ENCODE measurements at regions of chr1 and their contacts with region 1.

Region 1: GRCh38 chr1:114458237-114458777 is 52.7 kb downstream of the TRIM33 start:
- DNase-seq: peak; percentile 77
- ATAC-seq: peak; percentile 39
- H3K4me3 ChIP-seq: peak overlapping the region in 2 of 3 experiments; percentile 18 to 29; a peak in 1 of 6 replicates
- H3K27ac ChIP-seq: peak overlapping the region; percentile 92
- H3K4me1 ChIP-seq: peaks cover 69% of the 10 kb centered on the region
- H3K27me3 ChIP-seq: no peaks in the 10 kb centered on the region
- CTCF ChIP-seq: no peak
- EP300 ChIP-seq: peak in 1 of 2 experiments; percentile 69; a peak in 2 of 4 replicates
- POLR2A ChIP-seq: no peak
- RAD21 ChIP-seq: no peak

Region 2: GRCh38 chr1:114407898-114408555 is 50.3 kb before region 1 on chr1:
- CTCF ChIA-PET with region 1: no interaction called
- POLR2A ChIA-PET with region 1: no interaction called
- in situ Hi-C with region 1: no loop called
- intact Hi-C with region 1: no loop called
- DNase-seq: no peak
- ATAC-seq: no peak
- H3K4me3 ChIP-seq: no peak overlapping the region
- H3K27ac ChIP-seq: no peak overlapping the region
- H3K4me1 ChIP-seq: no peaks in the 10 kb centered on the region
- H3K27me3 ChIP-seq: no peaks in the 10 kb centered on the region
- CTCF ChIP-seq: no peak
- EP300 ChIP-seq: no peak
- POLR2A ChIP-seq: no peak
- RAD21 ChIP-seq: no peak

Region 3: DNA sequence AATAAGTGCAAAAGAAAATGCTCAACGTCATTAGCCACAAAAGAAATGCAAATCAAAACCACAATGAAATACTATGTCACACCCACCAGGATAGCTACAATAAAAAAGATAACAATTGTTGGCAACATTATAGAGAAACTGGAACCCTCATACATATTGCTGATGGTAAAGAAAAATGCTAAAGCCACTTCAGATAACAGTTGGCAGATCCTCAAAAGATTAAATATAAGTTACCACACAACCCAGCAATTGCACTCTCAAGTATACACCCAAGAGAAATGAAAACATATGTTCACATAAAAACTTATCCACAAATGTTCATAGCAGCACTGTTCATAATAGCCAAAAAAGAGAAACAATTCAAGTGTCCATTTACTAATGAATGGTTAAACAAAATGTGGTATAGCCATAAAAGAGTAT is 32.0 kb after region 1 on chr1:
- CTCF ChIA-PET with region 1: no interaction called
- POLR2A ChIA-PET with region 1: no interaction called
- in situ Hi-C with region 1: loop called (anchors 5 kb)
- intact Hi-C with region 1: no loop called
- DNase-seq: no peak
- ATAC-seq: no peak
- H3K4me3 ChIP-seq: no peak overlapping the region
- H3K27ac ChIP-seq: no peak overlapping the region
- H3K4me1 ChIP-seq: peaks cover 34% of the 10 kb centered on the region
- H3K27me3 ChIP-seq: no peaks in the 10 kb centered on the region
- CTCF ChIP-seq: no peak
- EP300 ChIP-seq: no peak
- POLR2A ChIP-seq: no peak
- RAD21 ChIP-seq: no peak

Region 4: GRCh38 chr1:114564141-114564540 is 105.8 kb after region 1 on chr1:
- CTCF ChIA-PET with region 1: no interaction called
- POLR2A ChIA-PET with region 1: no interaction called
- in situ Hi-C with region 1: no loop called
- intact Hi-C with region 1: no loop called
- DNase-seq: no peak
- ATAC-seq: no peak
- H3K4me3 ChIP-seq: no peak overlapping the region
- H3K27ac ChIP-seq: no peak overlapping the region
- H3K4me1 ChIP-seq: no peaks in the 10 kb centered on the region
- H3K27me3 ChIP-seq: no peaks in the 10 kb centered on the region
- CTCF ChIP-seq: no peak
- EP300 ChIP-seq: no peak
- POLR2A ChIP-seq: no peak
- RAD21 ChIP-seq: no peak

Region 5: DNA sequence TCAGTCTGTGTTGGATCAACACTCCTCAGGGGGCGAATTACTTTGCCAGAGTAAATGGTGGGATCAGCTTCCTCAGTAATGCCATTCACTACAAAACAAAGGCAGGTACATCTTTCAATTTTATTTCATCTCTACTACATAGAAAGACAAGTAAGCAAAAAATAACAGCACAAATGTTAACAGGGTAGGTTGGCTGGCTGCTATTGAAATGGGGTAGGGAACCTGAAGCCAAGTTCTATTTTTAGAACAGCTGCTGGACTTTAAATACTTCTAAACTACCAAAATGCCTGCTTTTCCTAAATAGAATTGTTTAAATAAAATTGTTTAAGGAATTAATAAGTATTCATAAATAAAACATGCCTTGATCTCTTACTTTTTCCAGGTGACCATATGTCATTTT is 265.6 kb after region 1 on chr1:
- CTCF ChIA-PET with region 1: no interaction called
- POLR2A ChIA-PET with region 1: no interaction called
- in situ Hi-C with region 1: no loop called
- intact Hi-C with region 1: loop called (anchors 5 kb)
- DNase-seq: no peak
- ATAC-seq: no peak
- H3K4me3 ChIP-seq: no peak overlapping the region
- H3K27ac ChIP-seq: no peak overlapping the region
- H3K4me1 ChIP-seq: peaks cover 22% of the 10 kb centered on the region
- H3K27me3 ChIP-seq: no peaks in the 10 kb centered on the region
- CTCF ChIP-seq: no peak
- EP300 ChIP-seq: no peak
- POLR2A ChIP-seq: no peak
- RAD21 ChIP-seq: no peak

Measured in HepG2 (cell line).